ENCODE measurements at regions of chr17 and their contacts with region 1.

Region 1: GRCh38 chr17:2853111-2853721 is 57.0 kb downstream of the RAP1GAP2 start:
- DNase-seq: no peak
- H3K4me3 ChIP-seq: peak overlapping the region; percentile 31
- CTCF ChIP-seq: no peak

Region 2: GRCh38 chr17:2749784-2750181 is 103.4 kb before region 1 on chr17:
- in situ Hi-C with region 1: loop called (anchors 25 kb)
- DNase-seq: peak; percentile 19
- H3K4me3 ChIP-seq: no peak overlapping the region
- CTCF ChIP-seq: no peak

Region 3: GRCh38 chr17:2916461-2916860 is 63.2 kb after region 1 on chr17:
- in situ Hi-C with region 1: loop called (anchors 5 kb)
- DNase-seq: no peak
- H3K4me3 ChIP-seq: no peak overlapping the region
- CTCF ChIP-seq: no peak

Region 4: GRCh38 chr17:3012926-3013581 is 159.8 kb after region 1 on chr17:
- in situ Hi-C with region 1: loop called (anchors 25 kb)
- DNase-seq: peak; percentile 11
- H3K4me3 ChIP-seq: no peak overlapping the region
- CTCF ChIP-seq: peak; percentile 75

Measured in astrocyte of the cerebellum (primary cell).